ENCODE measurements at regions of chr6 and their contacts with region 1.

Region 1: GRCh38 chr6:86856937-86857563 is 80.3 kb upstream of the HTR1E start:
- DNase-seq: no peak
- ATAC-seq: no peak
- H3K4me3 ChIP-seq: no peak overlapping the region
- H3K27ac ChIP-seq: no peak overlapping the region
- H3K4me1 ChIP-seq: no peaks in the 10 kb centered on the region
- H3K27me3 ChIP-seq: no peaks in the 10 kb centered on the region
- CTCF ChIP-seq: peak; percentile 57

Region 2: GRCh38 chr6:85756982-85757381 is 1100.1 kb before region 1 on chr6:
- intact Hi-C with region 1: loop called (anchors 10 kb)
- DNase-seq: no peak
- ATAC-seq: no peak
- H3K4me3 ChIP-seq: no peak overlapping the region
- H3K27ac ChIP-seq: no peak overlapping the region
- H3K4me1 ChIP-seq: no peaks in the 10 kb centered on the region
- H3K27me3 ChIP-seq: no peaks in the 10 kb centered on the region
- CTCF ChIP-seq: peak; percentile 39

Region 3: DNA sequence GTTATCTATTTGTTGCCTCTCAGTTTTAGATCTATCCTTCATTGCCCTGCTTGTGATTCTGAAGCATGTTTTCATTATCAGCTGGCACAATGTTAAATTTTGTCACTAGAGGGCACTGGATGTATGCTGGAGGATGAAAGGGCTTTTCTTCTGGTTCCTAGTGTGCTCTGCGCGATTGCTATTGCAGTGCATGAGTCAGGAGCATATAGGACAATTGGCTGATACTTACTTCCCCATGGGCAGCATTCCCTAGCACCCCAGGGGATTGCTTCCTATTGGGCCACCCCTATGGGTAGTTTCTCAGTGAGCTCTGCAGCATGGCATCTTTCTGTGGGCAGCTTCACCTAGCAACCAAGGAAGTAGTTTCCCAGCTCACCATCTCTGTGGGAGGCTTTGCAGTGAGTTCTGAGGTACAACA is 934.0 kb before region 1 on chr6:
- intact Hi-C with region 1: loop called in 1 of 2 experiments (anchors 10 kb)
- DNase-seq: no peak
- ATAC-seq: peak in 2 of 4 donors; percentile 47 to 65
- H3K4me3 ChIP-seq: no peak overlapping the region
- H3K27ac ChIP-seq: no peak overlapping the region
- H3K4me1 ChIP-seq: no peaks in the 10 kb centered on the region
- H3K27me3 ChIP-seq: no peaks in the 10 kb centered on the region
- CTCF ChIP-seq: peak; percentile 53

Region 4: GRCh38 chr6:86934365-86934764 is 77.3 kb after region 1 on chr6:
- intact Hi-C with region 1: no loop called
- DNase-seq: no peak
- ATAC-seq: no peak
- H3K4me3 ChIP-seq: no peak overlapping the region
- H3K27ac ChIP-seq: no peak overlapping the region
- H3K4me1 ChIP-seq: no peaks in the 10 kb centered on the region
- H3K27me3 ChIP-seq: peaks cover 0 to 28% (median 0%) of the 10 kb centered on the region in 3 donors
- CTCF ChIP-seq: no peak

Region 5: DNA sequence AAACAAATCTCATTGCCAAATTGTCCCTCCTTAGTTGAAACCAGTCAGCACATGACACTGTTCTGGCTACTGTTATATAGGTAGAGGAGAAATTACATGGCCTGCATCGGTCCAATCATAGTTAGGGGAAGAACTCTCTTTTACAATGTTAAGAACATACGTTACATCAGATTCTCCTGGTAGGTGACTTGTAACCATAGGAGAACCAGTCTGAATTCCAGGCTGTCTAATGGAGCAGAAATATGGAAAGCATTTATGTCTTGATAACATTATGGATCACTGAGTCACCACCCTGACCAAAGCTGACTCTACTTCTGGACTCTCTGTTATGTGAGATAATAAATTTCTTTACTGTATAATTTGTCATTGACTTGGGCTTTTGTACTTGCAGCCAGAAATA is 121.2 kb after region 1 on chr6:
- intact Hi-C with region 1: no loop called
- DNase-seq: no peak
- ATAC-seq: no peak
- H3K4me3 ChIP-seq: no peak overlapping the region
- H3K27ac ChIP-seq: no peak overlapping the region
- H3K4me1 ChIP-seq: no peaks in the 10 kb centered on the region
- H3K27me3 ChIP-seq: no peaks in the 10 kb centered on the region
- CTCF ChIP-seq: no peak